ENCODE measurements at regions of chr11 and their contacts with region 1.

Region 1: GRCh38 chr11:83156150-83156995 is 558 bp upstream of the PCF11 start:
- DNase-seq: peak; percentile 99
- ATAC-seq: peak; percentile 91
- H3K4me3 Mint-ChIP-seq: peak overlapping the region; percentile 100
- H3K27ac Mint-ChIP-seq: peak overlapping the region; percentile 100
- H3K4me1 Mint-ChIP-seq: peaks cover 20% of the 10 kb centered on the region
- H3K27me3 Mint-ChIP-seq: no peaks in the 10 kb centered on the region
- CTCF ChIP-seq: no peak

Region 2: GRCh38 chr11:82823647-82824619 is 332.4 kb before region 1 on chr11:
- CTCF ChIA-PET with region 1: no interaction called
- POLR2A ChIA-PET with region 1: no interaction called
- intact Hi-C with region 1: no loop called
- DNase-seq: no peak
- ATAC-seq: no peak
- H3K4me3 Mint-ChIP-seq: no peak overlapping the region
- H3K27ac Mint-ChIP-seq: no peak overlapping the region
- H3K4me1 Mint-ChIP-seq: no peaks in the 10 kb centered on the region
- H3K27me3 Mint-ChIP-seq: no peaks in the 10 kb centered on the region
- CTCF ChIP-seq: no peak

Region 3: DNA sequence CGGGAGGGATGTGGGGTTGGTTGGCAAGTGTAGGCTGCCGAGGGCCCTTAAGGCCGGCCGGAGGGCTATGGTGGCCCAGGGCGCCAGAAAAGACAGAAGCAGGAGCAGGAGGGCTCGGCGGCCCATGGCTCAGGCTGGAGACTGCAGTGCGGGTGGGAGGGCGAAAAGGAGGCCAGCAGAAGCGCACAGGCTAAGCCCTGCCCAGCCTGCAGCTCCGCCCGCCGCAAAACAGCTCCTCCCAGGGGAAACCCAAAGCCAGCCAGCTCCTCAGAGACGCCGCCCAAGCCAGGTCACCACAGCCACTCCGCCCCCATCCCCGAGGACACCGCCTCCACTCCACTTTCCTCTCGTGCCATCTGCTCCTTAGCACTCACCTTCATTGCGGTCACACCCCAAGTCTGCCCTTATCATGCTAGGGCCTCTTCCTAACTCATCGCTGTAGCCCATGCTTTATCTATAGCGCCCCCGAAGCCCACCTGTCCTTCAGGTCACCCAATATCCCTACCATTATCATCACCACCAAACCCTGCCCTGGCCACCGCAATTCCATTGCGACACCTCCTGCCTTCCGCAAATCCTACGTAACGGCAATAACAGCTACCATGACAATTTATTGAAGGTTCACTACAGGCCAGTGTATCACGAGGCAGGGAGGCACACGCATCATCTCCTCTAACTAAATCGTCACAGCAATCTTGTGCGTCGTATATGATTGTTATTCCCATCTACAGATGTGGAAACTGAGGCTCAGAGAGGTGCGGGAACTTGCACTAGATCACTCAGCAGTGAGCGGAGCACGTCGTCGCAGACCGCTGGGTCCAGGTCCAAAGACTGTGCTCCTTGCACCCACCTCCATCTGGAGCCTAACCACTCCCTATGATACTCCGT is 255.9 kb before region 1 on chr11 and contains the start of gene PRCP:
- CTCF ChIA-PET with region 1: interaction called, 7 read pairs
- POLR2A ChIA-PET with region 1: interaction called, 29 read pairs
- intact Hi-C with region 1: loop called (anchors 2 kb)
- DNase-seq: peak; percentile 98
- ATAC-seq: peak; percentile 80
- H3K4me3 Mint-ChIP-seq: peak within 1 kb of the TSS; percentile 79
- H3K27ac Mint-ChIP-seq: peak within 1 kb of the TSS; percentile 98
- H3K4me1 Mint-ChIP-seq: peaks cover 56% of the 10 kb centered on the region
- H3K27me3 Mint-ChIP-seq: no peaks in the 10 kb centered on the region
- CTCF ChIP-seq: no peak
- total RNA-seq, gene PRCP: 21.8 to 29.9 TPM

Region 4: GRCh38 chr11:82996966-82997606 is 159.3 kb before region 1 on chr11:
- CTCF ChIA-PET with region 1: interaction called, 4 read pairs
- POLR2A ChIA-PET with region 1: interaction called, 3 read pairs
- intact Hi-C with region 1: loop called (anchors 10 kb)
- DNase-seq: peak; percentile 72
- ATAC-seq: peak; percentile 63
- H3K4me3 Mint-ChIP-seq: no peak overlapping the region
- H3K27ac Mint-ChIP-seq: peak overlapping the region; percentile 88
- H3K4me1 Mint-ChIP-seq: peaks cover 73% of the 10 kb centered on the region
- H3K27me3 Mint-ChIP-seq: no peaks in the 10 kb centered on the region
- CTCF ChIP-seq: no peak

Region 5: DNA sequence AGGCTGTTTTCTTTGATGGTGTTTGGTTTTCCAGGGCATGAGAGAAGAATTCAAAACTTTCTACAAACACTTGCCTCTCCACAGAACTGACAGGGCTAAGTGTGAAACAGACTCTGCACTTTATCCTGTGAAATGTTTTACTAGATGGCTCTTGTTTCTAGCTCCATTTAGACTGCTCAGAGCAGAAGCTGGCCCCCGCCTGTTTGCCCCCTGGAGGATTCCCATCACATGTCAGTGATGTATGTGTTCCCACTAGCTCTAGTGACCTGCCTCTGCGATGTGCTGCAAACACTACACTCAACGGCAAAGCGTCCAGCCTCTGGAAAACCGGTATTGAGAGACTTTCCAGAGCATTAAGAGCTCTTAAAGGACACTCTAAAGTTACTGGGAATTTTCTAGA is 40.8 kb before region 1 on chr11:
- CTCF ChIA-PET with region 1: interaction called, 3 read pairs
- POLR2A ChIA-PET with region 1: interaction called, 10 read pairs
- intact Hi-C with region 1: no loop called
- DNase-seq: no peak
- ATAC-seq: no peak
- H3K4me3 Mint-ChIP-seq: no peak overlapping the region
- H3K27ac Mint-ChIP-seq: no peak overlapping the region
- H3K4me1 Mint-ChIP-seq: peaks cover 42% of the 10 kb centered on the region
- H3K27me3 Mint-ChIP-seq: no peaks in the 10 kb centered on the region
- CTCF ChIP-seq: no peak

Region 6: DNA sequence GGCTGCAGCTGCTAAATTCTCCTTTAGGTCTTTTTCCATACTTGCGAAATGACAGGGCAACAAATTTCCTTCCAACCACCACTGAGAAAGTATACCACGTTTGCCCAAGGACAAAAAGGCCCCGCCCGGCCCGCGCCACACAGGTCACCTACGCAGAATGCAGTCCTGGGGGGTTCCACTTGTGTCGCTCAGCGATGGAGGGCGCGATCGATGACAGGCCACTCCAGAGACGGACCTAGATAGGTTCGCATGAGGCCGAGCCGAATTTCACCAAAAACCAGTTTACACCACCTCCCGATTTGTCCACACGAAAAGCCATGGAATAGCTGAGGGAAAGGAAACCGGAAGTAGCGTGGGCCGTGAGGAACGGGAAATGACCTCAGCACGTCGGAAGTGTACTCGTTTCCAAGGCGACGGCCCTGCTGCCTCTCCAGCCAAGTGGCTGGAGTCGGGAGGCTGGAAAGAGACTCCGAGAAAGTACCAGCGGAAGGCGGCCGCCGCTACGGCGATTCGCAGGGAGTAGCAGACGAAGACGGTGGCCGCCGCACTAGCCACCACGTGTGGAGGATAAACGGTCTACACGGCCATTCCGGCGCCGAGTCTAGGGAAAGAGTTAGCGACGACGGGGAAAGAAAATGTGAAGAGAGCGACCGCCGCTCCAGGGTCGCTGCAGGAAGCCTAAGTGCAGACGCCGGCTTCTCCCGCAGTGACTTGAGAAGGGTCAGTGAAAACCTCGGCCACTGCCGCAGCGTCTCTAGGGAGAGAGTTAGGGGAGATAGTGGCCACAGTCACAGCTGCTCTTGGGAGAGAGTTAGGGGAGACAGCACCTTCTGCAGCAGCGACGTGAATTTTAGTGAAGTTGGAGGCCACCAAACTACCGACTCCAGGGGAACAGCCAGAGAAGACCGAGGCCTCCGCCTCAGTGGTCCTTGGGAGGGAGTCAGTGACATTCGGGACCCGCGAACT is 37.2 kb after region 1 on chr11 and contains the start of gene ANKRD42:
- CTCF ChIA-PET with region 1: interaction called, 3 read pairs
- POLR2A ChIA-PET with region 1: interaction called, 9 read pairs
- intact Hi-C with region 1: loop called (anchors 2 kb)
- DNase-seq: peak; percentile 92
- ATAC-seq: peak; percentile 77
- H3K4me3 Mint-ChIP-seq: peak within 1 kb of the TSS; percentile 98
- H3K27ac Mint-ChIP-seq: peak within 1 kb of the TSS; percentile 99
- H3K4me1 Mint-ChIP-seq: peaks cover 36% of the 10 kb centered on the region
- H3K27me3 Mint-ChIP-seq: no peaks in the 10 kb centered on the region
- CTCF ChIP-seq: no peak
- total RNA-seq, gene ANKRD42: 3.8 to 4.7 TPM

Region 7: DNA sequence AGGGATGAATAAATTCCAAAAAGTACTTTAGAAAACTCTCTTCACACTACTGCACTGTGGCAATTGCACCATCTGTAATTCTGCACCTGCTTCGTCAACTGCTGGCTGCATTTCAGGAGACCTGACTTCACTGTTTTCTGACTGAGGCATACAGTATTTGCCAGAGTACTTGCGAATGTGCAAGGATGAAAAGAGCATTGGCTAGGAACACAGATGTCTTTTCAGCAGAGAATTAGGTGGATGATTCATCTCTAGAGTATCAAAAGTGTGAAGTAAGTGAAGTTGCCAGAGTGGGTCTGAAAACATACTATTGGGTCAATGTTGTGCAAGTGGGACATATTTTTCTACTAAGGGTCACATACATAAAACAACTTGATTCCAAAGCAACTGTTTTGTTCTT is 557.3 kb after region 1 on chr11:
- CTCF ChIA-PET with region 1: no interaction called
- POLR2A ChIA-PET with region 1: no interaction called
- intact Hi-C with region 1: no loop called
- DNase-seq: no peak
- ATAC-seq: no peak
- H3K4me3 Mint-ChIP-seq: no peak overlapping the region
- H3K27ac Mint-ChIP-seq: no peak overlapping the region
- H3K4me1 Mint-ChIP-seq: no peaks in the 10 kb centered on the region
- H3K27me3 Mint-ChIP-seq: peaks cover 3% of the 10 kb centered on the region
- CTCF ChIP-seq: no peak